Head of caudate nucleus (tissue), 42 donors: ENCODE measurements at regions of chr5 and their contacts with region 1.

Region 1: DNA sequence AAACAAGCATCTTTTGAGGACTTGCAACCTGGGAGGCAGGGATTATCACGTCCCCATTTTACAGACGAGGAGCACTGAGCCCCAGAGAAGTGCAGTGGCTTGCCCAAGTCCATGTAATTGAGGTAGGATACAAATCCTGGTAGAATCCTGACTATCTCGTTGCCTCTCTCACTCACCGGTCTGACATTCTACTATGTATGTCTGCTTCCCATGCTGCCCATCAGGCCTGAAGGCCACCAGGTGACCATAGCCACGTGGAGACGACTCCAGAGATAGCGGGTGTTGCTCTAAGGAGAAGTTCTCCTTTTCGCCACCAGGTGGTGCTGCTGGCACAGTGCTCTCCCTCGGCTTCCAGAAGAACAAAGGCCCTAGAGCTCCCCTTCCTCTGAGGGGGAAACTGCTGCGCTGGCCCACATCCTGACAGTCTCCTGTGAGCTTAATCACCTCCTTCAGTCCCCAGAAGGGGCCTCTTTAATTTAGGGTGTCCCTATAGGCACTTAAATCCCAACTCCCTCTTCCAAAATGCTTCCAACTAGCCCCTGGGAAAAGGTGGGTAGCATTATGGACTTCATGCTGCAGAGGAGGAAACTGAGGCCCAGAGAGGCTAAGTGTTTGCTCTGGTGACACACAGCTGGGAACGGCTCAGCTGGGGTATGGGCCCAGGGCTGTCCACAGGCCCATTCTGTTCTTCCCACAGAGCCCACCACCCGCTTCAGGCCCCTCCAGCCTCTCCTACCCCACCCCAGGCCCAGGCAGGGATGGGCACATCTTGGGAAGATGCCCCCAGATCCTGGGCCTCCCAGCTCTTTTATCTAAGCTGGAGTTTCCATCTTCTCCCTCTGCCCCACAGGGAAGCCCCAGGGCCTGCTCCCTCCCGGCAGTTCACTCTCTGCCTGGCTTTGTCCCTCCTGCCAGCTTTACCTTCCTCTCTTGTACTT is 6.4 kb downstream of the SLC34A1 start:
- DNase-seq: peak in 41 of 42 donors; percentile 71 to 95 (median 84)

Region 2: DNA sequence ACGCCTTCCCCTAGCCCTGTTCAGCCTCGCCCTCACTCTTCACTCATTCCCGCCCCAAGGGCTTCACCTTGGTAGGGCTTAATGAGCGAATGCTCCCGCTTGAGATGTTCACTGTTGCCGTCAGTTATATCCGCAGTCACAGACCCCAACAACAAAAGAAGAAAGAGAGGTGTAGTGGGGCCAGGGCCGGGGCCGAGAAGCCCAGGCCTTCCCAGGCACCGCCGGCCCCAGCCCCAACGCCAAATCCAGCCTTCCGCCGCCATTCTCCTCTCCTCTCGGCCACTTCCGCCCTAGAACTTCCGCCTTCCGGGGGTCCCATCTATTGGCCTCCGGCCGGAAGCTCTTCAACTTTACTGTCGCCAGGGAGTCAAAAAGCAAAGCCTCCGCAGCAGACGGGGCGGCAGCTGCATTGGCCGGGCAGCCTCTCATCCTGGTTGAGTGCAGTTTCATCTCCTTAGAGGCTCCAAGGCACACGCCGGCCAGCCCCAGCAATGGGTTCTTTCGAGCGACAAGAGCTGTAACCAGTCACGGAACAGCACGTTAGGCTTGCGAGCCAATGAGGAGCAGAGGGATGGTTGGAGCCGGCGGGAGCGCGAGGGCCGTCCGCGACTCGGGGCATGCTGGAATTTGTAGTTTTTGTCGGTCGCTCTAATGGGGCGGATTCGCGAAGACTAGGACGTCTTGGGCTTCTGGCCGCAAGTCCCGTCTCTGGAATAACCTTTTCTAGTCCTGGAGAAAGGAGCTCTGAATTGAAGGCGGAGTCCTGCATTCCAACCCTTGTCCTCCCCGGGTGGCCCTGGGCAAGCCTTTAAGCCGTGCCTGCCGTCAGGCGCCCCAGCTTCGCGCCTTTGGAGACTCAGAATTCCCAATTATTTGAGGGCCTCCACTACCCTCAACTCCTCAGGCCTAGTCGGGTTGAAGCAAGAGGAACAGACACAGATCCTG is 39.0 kb before region 1 on chr5 and contains the start of gene LMAN2:
- intact Hi-C with region 1: no loop called
- DNase-seq: peak; percentile 92 to 98 (median 96)

Region 3: DNA sequence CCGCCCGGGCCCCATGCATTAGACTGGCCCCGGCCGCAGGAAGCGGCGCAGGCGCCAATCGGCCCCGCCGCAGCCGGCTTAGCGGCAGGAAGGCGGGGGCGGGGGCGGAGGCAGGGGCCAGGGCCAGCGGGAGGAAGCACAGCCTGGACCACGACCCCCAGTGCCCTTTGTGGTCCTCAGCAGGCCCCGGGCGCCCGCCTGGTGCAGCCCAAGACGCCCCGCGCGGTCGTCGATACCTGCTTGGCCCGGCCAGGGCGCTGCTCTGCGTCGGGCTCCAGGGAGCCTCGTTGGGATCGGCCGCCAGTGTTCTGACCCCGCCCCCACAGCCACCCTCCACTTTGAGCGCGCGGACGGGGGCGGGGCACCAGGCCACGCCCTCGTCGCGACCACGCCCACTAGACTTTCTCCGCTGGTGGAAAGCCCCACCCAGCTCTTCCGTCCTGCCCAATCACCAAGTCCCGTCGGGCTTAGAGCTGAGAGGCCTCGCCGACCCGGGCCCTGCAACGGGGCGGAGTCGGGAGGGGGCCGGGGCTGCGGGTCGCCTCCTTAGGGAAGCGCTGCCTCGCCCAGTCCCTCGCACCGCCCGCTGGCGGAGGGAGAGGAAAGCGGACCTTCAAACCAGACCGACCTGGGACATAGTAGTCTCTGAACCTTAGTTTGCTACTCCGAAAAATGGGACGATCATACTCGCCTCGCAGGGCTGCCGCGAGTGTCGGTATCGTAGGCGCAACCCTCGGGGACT is 106.8 kb after region 1 on chr5 and contains the start of gene PDLIM7:
- intact Hi-C with region 1: loop called (anchors 5 kb)
- DNase-seq: peak; percentile 76 to 97 (median 90)